ENCODE measurements at regions of chr12 and their contacts with region 1.

Region 1: GRCh38 chr12:108507971-108508642 is 7.0 kb upstream of the FICD start:
- DNase-seq: no peak
- H3K4me3 ChIP-seq: no peak overlapping the region
- H3K27ac ChIP-seq: no peak overlapping the region
- H3K4me1 ChIP-seq: peaks cover 12 to 15% of the 10 kb centered on the region in 2 donors
- H3K27me3 ChIP-seq: no peaks in the 10 kb centered on the region
- CTCF ChIP-seq: no peak
- POLR2A ChIP-seq: no peak

Region 2: GRCh38 chr12:107670999-107671643 is 837.0 kb before region 1 on chr12:
- intact Hi-C with region 1: loop called in 1 of 2 experiments (anchors 10 kb)
- DNase-seq: peak in 5 of 7 donors; percentile 22 to 58 (median 38)
- H3K4me3 ChIP-seq: no peak overlapping the region
- H3K27ac ChIP-seq: no peak overlapping the region
- H3K4me1 ChIP-seq: no peaks in the 10 kb centered on the region
- H3K27me3 ChIP-seq: peaks cover 10% of the 10 kb centered on the region
- CTCF ChIP-seq: peak; percentile 30 to 59 (median 46)
- POLR2A ChIP-seq: no peak